ENCODE measurements at regions of chr1 and their contacts with region 1.

Region 1: DNA sequence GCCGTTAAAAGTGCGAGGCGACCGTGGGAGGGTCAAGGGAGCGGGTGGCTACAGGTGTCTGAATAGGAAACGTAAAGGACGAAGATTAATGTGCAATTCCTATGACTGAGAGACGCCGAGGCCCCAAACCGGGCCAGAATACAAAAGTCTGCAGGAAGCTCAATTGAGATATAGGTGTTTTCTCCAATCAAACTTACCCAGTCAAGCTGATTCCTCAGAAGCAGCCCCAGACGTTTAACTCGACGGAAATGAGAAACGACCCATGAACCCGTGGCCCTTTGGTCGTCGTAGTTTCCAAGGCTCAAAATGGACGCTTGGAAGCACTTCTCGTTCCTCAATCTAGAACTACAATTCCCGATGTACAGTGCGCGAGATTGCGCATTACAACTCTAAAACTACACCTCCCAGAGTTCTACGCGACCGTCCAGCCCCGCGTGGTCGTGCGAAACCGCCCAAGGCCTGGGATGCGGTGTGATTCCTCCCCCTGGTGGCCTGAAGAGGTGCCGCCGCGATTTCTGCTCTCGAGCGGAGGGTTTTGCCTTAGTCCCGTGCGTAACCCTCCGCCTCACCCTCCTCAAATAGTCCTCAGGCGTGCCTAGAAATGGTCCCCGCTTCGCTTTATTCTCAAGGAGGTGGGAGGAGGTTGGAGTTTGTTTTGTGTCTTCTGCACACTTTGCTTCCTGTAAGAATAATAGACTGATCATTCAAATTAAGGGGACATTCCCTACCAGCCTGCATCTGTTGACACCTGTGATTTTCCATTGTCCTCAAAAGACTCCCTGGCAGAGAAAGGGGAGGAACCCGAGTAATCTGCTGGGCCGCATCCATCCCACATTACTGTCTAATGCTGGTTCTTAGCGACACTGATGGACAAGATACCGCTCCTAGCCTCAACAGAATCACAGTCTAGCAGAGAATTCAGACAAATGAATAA is at the start of gene PAFAH2:
- DNase-seq: peak; percentile 100
- H3K4me3 ChIP-seq: peak within 1 kb of the TSS; percentile 76
- H3K27ac ChIP-seq: peak within 1 kb of the TSS; percentile 63
- H3K4me1 ChIP-seq: peaks cover 20% of the 10 kb centered on the region
- CTCF ChIP-seq: peak; percentile 93
- total RNA-seq, gene PAFAH2: 2.9 and 4.1 TPM in 2 replicates

Region 2: DNA sequence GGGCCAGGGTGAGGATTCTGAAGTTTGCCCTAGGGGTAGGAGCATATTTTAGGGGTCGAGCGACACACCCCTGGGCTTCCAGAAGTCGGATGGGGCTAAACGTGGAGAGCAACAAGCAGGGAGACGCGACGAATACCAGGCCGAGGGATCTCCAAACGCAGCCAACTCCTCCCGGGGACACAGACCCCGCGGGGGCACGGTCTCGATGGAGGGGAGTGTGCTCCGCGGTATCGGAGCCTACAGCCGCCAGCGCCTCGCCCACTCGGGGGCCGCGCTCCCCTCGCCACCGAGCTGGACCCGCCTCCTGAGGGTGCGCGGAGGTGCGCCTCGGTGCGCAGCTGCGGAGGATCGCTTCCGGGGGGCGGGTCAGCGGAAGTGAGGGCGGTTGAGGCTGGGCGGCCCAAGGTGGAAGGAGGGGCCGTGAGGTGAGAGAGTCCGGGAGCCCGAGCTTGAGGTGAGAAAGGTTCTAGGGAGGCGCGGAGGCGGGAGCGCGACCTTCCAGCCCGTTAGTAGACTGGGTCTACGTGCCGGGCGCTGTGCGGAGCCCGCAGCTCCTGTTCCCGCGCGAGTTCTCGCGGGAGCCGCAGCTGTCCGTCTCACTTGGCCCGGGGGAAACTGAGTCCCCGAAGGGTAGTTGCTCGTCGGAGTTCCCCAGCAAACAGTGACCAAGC is 178.4 kb before region 1 on chr1 and contains the start of gene MTFR1L:
- CTCF ChIA-PET with region 1: interaction called, 5 read pairs
- POLR2A ChIA-PET with region 1: interaction called, 6 read pairs
- intact Hi-C with region 1: loop called (anchors 2 kb)
- DNase-seq: peak; percentile 92
- H3K4me3 ChIP-seq: peak within 1 kb of the TSS; percentile 84
- H3K27ac ChIP-seq: peak within 1 kb of the TSS; percentile 87
- H3K4me1 ChIP-seq: peaks cover 30% of the 10 kb centered on the region
- CTCF ChIP-seq: no peak
- total RNA-seq, gene MTFR1L: 33.6 and 35.3 TPM in 2 replicates

Region 3: GRCh38 chr1:25837262-25837875 is 160.7 kb before region 1 on chr1:
- CTCF ChIA-PET with region 1: interaction called, 8 read pairs
- POLR2A ChIA-PET with region 1: no interaction called
- intact Hi-C with region 1: loop called (anchors 1 kb)
- DNase-seq: peak; percentile 33
- H3K4me3 ChIP-seq: no peak overlapping the region
- H3K27ac ChIP-seq: no peak overlapping the region
- H3K4me1 ChIP-seq: no peaks in the 10 kb centered on the region
- CTCF ChIP-seq: peak; percentile 81

Region 4: DNA sequence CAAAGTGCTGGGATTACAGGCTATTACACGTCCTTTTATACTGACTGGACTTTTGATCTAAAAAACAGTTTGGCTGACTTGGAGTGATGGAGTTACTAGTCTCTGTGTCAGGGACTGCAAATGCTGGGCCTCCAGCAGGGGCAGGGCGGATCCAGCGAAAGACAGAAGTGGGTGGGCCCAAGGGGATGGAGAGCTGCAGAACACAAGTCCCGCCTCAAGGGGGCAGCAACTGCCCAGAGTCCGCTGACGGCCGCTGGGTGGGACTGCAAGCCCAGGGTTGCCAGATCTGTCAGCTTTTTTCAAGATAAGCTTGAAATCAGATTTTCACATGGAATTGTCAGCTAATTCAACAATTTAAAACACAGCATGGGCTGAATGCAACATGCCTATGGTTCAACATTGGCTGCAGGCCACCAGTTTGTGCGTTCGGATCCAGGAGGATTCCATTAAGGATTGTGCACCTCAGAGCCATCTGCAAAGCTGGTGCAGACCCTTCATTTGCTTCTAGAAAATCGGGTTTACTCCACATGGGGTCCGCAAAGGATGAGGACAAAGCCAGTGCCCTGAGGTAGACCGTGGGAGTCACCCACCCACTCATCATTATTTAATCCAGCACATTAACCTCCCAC is 102.6 kb before region 1 on chr1:
- CTCF ChIA-PET with region 1: interaction called, 20 read pairs
- POLR2A ChIA-PET with region 1: interaction called, 14 read pairs
- intact Hi-C with region 1: loop called (anchors 1 kb)
- DNase-seq: peak; percentile 91
- H3K4me3 ChIP-seq: no peak overlapping the region
- H3K27ac ChIP-seq: peak overlapping the region; percentile 4
- H3K4me1 ChIP-seq: peaks cover 6% of the 10 kb centered on the region
- CTCF ChIP-seq: peak; percentile 99

Region 5: DNA sequence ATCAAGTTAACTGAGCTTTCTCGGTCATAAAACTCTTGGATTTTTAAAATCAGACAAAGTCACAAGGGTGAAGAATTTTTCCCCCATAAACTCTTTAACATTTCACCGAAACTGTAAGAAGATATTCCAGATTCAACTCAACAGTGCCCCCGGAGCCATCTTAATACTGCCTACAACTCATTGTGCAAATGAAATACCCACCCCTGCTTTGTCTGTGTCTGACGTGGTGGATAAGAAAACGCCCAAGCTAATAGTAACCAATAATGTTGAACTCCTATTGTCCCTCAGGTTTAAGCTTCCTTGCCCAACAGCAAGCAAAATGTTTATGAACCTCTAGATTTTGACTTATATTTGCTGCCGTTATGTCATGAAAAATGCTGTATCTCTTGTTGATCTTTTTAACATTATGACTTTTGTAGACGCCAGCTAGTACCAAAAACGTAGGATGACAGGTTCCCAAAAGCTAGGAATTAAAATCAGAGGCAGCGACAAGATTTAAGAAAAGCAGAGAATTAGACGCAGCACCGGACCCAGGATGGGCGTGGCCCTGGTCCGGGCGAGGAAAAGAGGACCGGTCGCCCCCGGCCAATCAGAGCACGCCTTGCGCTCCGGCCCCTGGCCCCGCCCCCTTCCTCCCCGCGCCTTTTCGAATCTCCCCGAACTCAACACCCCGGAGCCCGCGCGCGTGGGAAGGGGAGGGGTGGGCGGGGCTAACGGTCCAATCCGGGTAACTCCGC is 93.0 kb before region 1 on chr1:
- CTCF ChIA-PET with region 1: interaction called, 3 read pairs
- POLR2A ChIA-PET with region 1: interaction called, 18 read pairs
- intact Hi-C with region 1: loop called (anchors 1 kb)
- DNase-seq: peak; percentile 96
- H3K4me3 ChIP-seq: peak overlapping the region; percentile 84
- H3K27ac ChIP-seq: peak overlapping the region; percentile 84
- H3K4me1 ChIP-seq: peaks cover 27% of the 10 kb centered on the region
- CTCF ChIP-seq: peak; percentile 68

Region 6: GRCh38 chr1:25971066-25971810 is 26.9 kb before region 1 on chr1:
- CTCF ChIA-PET with region 1: no interaction called
- POLR2A ChIA-PET with region 1: interaction called, 11 read pairs
- intact Hi-C with region 1: no loop called
- DNase-seq: peak; percentile 69
- H3K4me3 ChIP-seq: peak overlapping the region; percentile 3
- H3K27ac ChIP-seq: peak overlapping the region; percentile 71
- H3K4me1 ChIP-seq: peaks cover 17% of the 10 kb centered on the region
- CTCF ChIP-seq: no peak

Region 7: DNA sequence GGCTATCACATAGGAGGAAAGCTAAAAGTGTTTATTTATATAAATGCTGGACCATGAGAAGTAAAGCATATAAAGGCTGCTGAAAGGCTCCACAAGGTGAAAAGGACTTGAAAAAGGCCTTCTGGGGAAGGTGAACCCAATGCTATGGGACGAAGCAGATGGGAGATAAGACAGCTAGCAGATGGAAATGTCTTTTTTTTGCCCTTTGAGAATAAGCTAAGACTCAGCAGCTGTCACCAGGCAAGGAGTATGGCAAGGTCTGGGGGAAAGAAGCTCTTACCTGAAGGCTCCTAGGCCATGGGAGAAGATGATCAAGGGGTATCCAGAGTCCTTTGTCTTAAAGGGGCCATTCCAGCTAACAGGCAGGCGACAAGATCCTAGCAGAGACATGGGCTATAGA is 10.1 kb before region 1 on chr1:
- CTCF ChIA-PET with region 1: no interaction called
- POLR2A ChIA-PET with region 1: interaction called, 18 read pairs
- intact Hi-C with region 1: no loop called
- DNase-seq: no peak
- H3K4me3 ChIP-seq: no peak overlapping the region
- H3K27ac ChIP-seq: no peak overlapping the region
- H3K4me1 ChIP-seq: no peaks in the 10 kb centered on the region
- CTCF ChIP-seq: no peak

Region 8: DNA sequence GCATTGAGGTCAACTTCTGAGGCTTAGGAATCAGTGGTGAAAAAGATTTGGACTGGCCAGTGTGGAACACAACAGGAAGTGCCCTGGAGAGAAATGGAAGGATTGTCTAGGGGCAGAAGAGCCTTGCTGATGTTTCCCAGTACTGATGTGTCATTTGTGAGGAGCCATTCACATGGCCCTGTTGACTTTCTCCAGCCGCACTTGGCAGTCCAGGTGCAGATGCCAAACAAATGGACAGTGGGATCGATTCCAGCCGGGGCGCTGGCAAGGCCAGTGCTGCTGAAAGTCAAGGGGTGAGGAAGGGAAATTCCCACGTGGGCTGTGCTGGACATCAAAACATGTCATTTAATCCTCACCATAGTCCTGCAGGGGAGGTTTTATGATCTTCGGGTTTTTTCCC is 74.2 kb after region 1 on chr1:
- CTCF ChIA-PET with region 1: no interaction called
- POLR2A ChIA-PET with region 1: no interaction called
- intact Hi-C with region 1: no loop called
- DNase-seq: no peak
- H3K4me3 ChIP-seq: no peak overlapping the region
- H3K27ac ChIP-seq: no peak overlapping the region
- H3K4me1 ChIP-seq: no peaks in the 10 kb centered on the region
- CTCF ChIP-seq: no peak

Measured in OCI-LY7 (cell line).